B cell (primary cell): ENCODE measurements at regions of chr22 and their contacts with region 1.

Region 1: DNA sequence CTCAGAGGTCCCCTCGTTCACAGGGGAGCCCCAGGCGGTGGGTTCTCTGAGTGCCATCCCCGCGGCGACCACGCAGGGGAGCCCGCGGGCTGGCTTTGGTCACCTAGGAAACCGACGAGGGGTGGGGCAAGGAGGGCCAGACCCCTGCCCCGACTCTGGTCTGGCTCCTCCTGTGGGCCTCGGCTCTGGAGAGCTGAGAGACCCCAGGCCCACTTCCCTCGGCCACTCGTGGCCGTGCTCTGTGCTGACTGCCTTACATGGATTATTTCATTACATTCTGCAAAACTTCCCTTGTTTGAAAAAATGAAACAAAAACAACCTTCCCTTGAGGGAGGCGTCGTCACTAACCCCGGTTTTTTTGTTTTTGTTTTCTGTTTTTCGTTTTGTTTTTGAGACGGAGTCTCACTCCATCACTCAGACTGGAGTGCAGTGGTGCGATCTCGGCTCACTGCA is 15.1 kb upstream of the CYTH4 start:
- DNase-seq: peak; percentile 82
- ATAC-seq: peak; percentile 98
- H3K4me3 ChIP-seq: peak overlapping the region; percentile 63 to 93 (median 67)
- H3K4me3 Mint-ChIP-seq: peak overlapping the region; percentile 93
- H3K27ac ChIP-seq: peak overlapping the region; percentile 69 to 79
- H3K27ac Mint-ChIP-seq: peak overlapping the region; percentile 97
- H3K4me1 ChIP-seq: peaks cover 21 to 28% of the 10 kb centered on the region in 2 donors
- H3K4me1 Mint-ChIP-seq: peaks cover 33% of the 10 kb centered on the region
- H3K27me3 ChIP-seq: no peaks in the 10 kb centered on the region
- H3K27me3 Mint-ChIP-seq: no peaks in the 10 kb centered on the region
- CTCF ChIP-seq: peak; percentile 96

Region 2: DNA sequence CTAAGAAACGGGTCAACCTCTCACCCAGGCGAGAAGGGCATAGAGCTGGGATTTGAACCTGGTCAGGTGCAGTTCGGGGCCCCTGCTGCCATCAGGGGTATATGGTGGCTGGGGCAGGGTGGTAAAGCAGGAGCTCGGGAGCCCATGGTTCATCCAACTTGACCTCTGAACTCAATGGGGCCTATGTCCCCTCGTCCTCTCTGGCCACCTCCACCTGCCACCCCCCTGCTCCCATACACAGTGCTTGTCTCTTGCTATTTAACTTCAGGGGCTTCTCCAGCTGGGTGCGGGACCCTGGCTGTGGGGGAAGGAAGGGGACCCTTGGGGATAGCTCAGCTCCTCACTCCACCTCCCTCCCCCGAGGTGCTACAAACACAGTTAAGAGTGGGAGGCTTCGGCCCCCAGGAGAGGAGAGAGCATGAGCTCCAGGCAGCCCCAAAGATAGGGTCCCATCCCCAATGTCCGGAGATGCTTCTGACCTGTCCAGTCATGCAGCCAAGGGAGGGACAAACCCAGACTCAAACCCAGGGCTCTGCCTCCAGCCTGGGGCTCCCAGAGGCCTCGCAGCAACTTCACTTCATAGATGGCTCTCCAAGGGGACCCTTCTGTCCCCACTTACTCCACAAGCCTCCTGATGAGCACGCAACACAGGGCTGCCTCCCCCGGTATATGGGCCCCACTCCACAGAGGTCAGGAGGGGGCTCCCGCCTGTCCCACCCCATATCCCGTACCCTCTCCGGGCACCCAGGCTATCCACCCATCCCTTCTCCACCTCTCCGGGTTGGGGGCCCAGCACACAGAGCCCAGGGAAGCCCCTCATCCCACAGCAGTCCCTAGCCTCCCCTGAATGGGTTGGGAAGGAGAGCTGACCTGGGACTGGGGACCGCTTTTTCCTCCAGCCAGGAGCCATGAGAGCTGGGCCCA is 118.2 kb before region 1 on chr22:
- CTCF ChIA-PET with region 1: no interaction called
- POLR2A ChIA-PET with region 1: no interaction called
- intact Hi-C with region 1: no loop called
- DNase-seq: no peak
- ATAC-seq: no peak
- H3K4me3 ChIP-seq: peak overlapping the region in 2 of 5 experiments; percentile 3 to 5
- H3K4me3 Mint-ChIP-seq: no peak overlapping the region
- H3K27ac ChIP-seq: no peak overlapping the region
- H3K27ac Mint-ChIP-seq: no peak overlapping the region
- H3K4me1 ChIP-seq: peaks cover 0 to 20% of the 10 kb centered on the region in 2 donors
- H3K4me1 Mint-ChIP-seq: peaks cover 22% of the 10 kb centered on the region
- H3K27me3 ChIP-seq: no peaks in the 10 kb centered on the region
- H3K27me3 Mint-ChIP-seq: no peaks in the 10 kb centered on the region
- CTCF ChIP-seq: no peak

Region 3: GRCh38 chr22:37282385-37282677 is 15.2 kb after region 1 on chr22 and contains the start of gene CYTH4:
- CTCF ChIA-PET with region 1: interaction called, 126 read pairs
- POLR2A ChIA-PET with region 1: interaction called, 4 read pairs
- intact Hi-C with region 1: loop called (anchors 2 kb)
- DNase-seq: peak; percentile 82
- ATAC-seq: peak; percentile 58
- H3K4me3 ChIP-seq: peak within 1 kb of the TSS; percentile 82 to 100 (median 99)
- H3K4me3 Mint-ChIP-seq: peak within 1 kb of the TSS; percentile 89
- H3K27ac ChIP-seq: peak within 1 kb of the TSS; percentile 79 to 83
- H3K27ac Mint-ChIP-seq: peak within 1 kb of the TSS; percentile 97
- H3K4me1 ChIP-seq: peaks cover 36 to 73% of the 10 kb centered on the region in 2 donors
- H3K4me1 Mint-ChIP-seq: peaks cover 81% of the 10 kb centered on the region
- H3K27me3 ChIP-seq: no peaks in the 10 kb centered on the region
- H3K27me3 Mint-ChIP-seq: no peaks in the 10 kb centered on the region
- CTCF ChIP-seq: no peak
- total RNA-seq, gene CYTH4: 92.2 and 98.0 TPM in 2 replicates

Region 4: DNA sequence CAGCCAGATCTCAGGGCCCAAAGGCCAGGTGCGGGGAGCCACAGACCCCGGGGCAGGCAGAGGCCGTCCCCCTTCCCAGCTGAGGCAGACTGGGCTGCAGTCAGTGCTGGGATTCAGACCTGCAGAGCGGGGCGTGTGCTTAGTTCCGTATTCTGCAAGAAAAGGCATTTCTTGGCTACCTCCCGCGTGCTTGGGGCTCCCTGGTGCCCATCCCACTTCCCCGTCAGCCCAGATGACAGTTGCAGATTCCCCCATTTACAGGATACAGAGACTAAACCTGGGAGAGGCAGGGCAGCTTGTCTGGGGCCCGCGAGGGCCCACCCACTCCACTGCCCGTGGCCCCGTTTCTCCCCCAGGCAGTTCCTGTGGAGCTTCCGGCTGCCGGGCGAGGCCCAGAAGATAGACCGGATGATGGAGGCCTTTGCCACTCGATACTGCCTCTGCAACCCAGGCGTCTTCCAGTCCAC is 33.4 kb after region 1 on chr22:
- CTCF ChIA-PET with region 1: interaction called, 12 read pairs
- POLR2A ChIA-PET with region 1: no interaction called
- intact Hi-C with region 1: no loop called
- DNase-seq: peak; percentile 57
- ATAC-seq: peak; percentile 64
- H3K4me3 ChIP-seq: no peak overlapping the region
- H3K4me3 Mint-ChIP-seq: peak overlapping the region; percentile 60
- H3K27ac ChIP-seq: peak overlapping the region; percentile 18 to 25
- H3K27ac Mint-ChIP-seq: peak overlapping the region; percentile 83
- H3K4me1 ChIP-seq: peaks cover 27 to 64% of the 10 kb centered on the region in 2 donors
- H3K4me1 Mint-ChIP-seq: peaks cover 39% of the 10 kb centered on the region
- H3K27me3 ChIP-seq: no peaks in the 10 kb centered on the region
- H3K27me3 Mint-ChIP-seq: no peaks in the 10 kb centered on the region
- CTCF ChIP-seq: no peak

Region 5: DNA sequence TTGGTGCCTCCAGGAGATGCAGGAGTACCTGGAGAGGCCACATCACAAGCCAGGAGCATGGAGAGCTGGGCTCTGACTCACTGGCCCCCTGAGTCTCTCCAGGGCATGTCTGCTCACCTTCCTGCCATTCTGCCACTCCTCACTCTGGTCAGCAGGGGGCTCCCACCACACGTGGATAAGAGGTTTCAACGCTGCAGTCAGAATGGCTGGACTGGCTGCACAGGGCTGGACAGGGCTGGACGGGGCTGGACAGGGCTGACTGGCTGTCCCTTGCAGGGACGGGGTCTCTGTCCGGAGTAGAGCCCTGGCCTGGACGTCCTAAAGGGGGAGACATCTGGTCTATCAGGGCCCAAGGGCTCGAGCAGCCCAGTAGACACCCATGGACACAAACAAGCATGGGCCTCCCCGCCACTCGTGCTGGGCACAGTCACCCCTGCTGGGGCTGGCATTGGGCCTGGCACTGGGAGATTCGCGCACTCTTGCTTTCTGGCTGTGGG is 49.8 kb after region 1 on chr22:
- CTCF ChIA-PET with region 1: interaction called, 64 read pairs
- POLR2A ChIA-PET with region 1: no interaction called
- intact Hi-C with region 1: loop called (anchors 1 kb)
- DNase-seq: peak; percentile 83
- ATAC-seq: peak; percentile 86
- H3K4me3 ChIP-seq: no peak overlapping the region
- H3K4me3 Mint-ChIP-seq: no peak overlapping the region
- H3K27ac ChIP-seq: no peak overlapping the region
- H3K27ac Mint-ChIP-seq: no peak overlapping the region
- H3K4me1 ChIP-seq: peaks cover 20 to 29% of the 10 kb centered on the region in 2 donors
- H3K4me1 Mint-ChIP-seq: peaks cover 32% of the 10 kb centered on the region
- H3K27me3 ChIP-seq: peaks cover 0 to 3% (median 0%) of the 10 kb centered on the region in 4 experiments
- H3K27me3 Mint-ChIP-seq: peaks cover 12% of the 10 kb centered on the region
- CTCF ChIP-seq: peak; percentile 85

Region 6: GRCh38 chr22:37328017-37328416 is 60.9 kb after region 1 on chr22:
- CTCF ChIA-PET with region 1: no interaction called
- POLR2A ChIA-PET with region 1: no interaction called
- intact Hi-C with region 1: no loop called
- DNase-seq: no peak
- ATAC-seq: no peak
- H3K4me3 ChIP-seq: no peak overlapping the region
- H3K4me3 Mint-ChIP-seq: no peak overlapping the region
- H3K27ac ChIP-seq: no peak overlapping the region
- H3K27ac Mint-ChIP-seq: no peak overlapping the region
- H3K4me1 ChIP-seq: peaks cover 8 to 23% of the 10 kb centered on the region in 2 donors
- H3K4me1 Mint-ChIP-seq: peaks cover 2% of the 10 kb centered on the region
- H3K27me3 ChIP-seq: peaks cover 0 to 75% (median 31%) of the 10 kb centered on the region in 4 experiments
- H3K27me3 Mint-ChIP-seq: peaks cover 59% of the 10 kb centered on the region
- CTCF ChIP-seq: no peak

Region 7: GRCh38 chr22:37428649-37429586 is 161.8 kb after region 1 on chr22:
- CTCF ChIA-PET with region 1: interaction called, 22 read pairs
- POLR2A ChIA-PET with region 1: interaction called, 3 read pairs
- intact Hi-C with region 1: loop called (anchors 1 kb)
- DNase-seq: peak; percentile 75
- ATAC-seq: peak; percentile 54
- H3K4me3 ChIP-seq: no peak overlapping the region
- H3K4me3 Mint-ChIP-seq: peak overlapping the region; percentile 44
- H3K27ac ChIP-seq: no peak overlapping the region
- H3K27ac Mint-ChIP-seq: no peak overlapping the region
- H3K4me1 ChIP-seq: peaks cover 24 to 27% of the 10 kb centered on the region in 2 donors
- H3K4me1 Mint-ChIP-seq: peaks cover 21% of the 10 kb centered on the region
- H3K27me3 ChIP-seq: peaks cover 0 to 84% (median 27%) of the 10 kb centered on the region in 4 experiments
- H3K27me3 Mint-ChIP-seq: peaks cover 69% of the 10 kb centered on the region
- CTCF ChIP-seq: peak; percentile 69

Region 8: GRCh38 chr22:37457093-37457893 is 190.1 kb after region 1 on chr22:
- CTCF ChIA-PET with region 1: interaction called, 34 read pairs
- POLR2A ChIA-PET with region 1: interaction called, 12 read pairs
- intact Hi-C with region 1: loop called (anchors 1 kb)
- DNase-seq: peak; percentile 82
- ATAC-seq: peak; percentile 95
- H3K4me3 ChIP-seq: no peak overlapping the region
- H3K4me3 Mint-ChIP-seq: no peak overlapping the region
- H3K27ac ChIP-seq: no peak overlapping the region
- H3K27ac Mint-ChIP-seq: no peak overlapping the region
- H3K4me1 ChIP-seq: no peaks in the 10 kb centered on the region
- H3K4me1 Mint-ChIP-seq: peaks cover 1% of the 10 kb centered on the region
- H3K27me3 ChIP-seq: no peaks in the 10 kb centered on the region
- H3K27me3 Mint-ChIP-seq: no peaks in the 10 kb centered on the region
- CTCF ChIP-seq: peak; percentile 97

Region 9: GRCh38 chr22:37498289-37498909 is 231.2 kb after region 1 on chr22:
- CTCF ChIA-PET with region 1: interaction called, 4 read pairs
- POLR2A ChIA-PET with region 1: no interaction called
- intact Hi-C with region 1: loop called (anchors 5 kb)
- DNase-seq: peak; percentile 78
- ATAC-seq: peak; percentile 97
- H3K4me3 ChIP-seq: no peak overlapping the region
- H3K4me3 Mint-ChIP-seq: no peak overlapping the region
- H3K27ac ChIP-seq: no peak overlapping the region
- H3K27ac Mint-ChIP-seq: no peak overlapping the region
- H3K4me1 ChIP-seq: peaks cover 0 to 7% of the 10 kb centered on the region in 2 donors
- H3K4me1 Mint-ChIP-seq: no peaks in the 10 kb centered on the region
- H3K27me3 ChIP-seq: peaks cover 0 to 29% (median 1%) of the 10 kb centered on the region in 4 experiments
- H3K27me3 Mint-ChIP-seq: peaks cover 20% of the 10 kb centered on the region
- CTCF ChIP-seq: peak; percentile 76